K562 (cell line): ENCODE measurements at regions of chr2 and their contacts with region 1.

Region 1: DNA sequence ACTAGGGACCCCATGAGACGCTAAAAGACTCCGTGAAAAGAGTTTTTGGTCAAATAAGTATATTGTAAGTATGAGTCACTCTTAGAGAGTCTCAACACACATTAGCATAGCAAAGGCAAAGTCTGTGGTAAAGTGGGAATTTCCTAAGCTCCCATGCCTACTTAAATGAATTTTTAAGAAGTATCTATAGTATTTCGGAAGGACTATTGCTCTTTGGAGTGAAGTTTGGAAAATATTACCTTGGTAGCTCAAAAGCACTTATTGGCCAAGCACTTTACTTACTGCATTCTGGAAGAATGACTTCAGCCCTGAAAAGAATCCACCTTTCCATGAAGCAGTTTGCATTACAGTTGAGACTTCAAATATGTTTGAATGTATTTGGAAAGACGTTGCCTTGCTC is 57.1 kb downstream of the CAVIN2 start:
- DNase-seq: no peak
- ATAC-seq: no peak
- H3K4me3 ChIP-seq: no peak overlapping the region
- H3K27ac ChIP-seq: no peak overlapping the region
- H3K4me1 ChIP-seq: peaks cover 0 to 7% of the 10 kb centered on the region in 2 experiments; a peak in 1 of 5 replicates
- H3K27me3 ChIP-seq: peaks cover 0 to 2% of the 10 kb centered on the region in 2 experiments; a peak in 2 of 5 replicates
- CTCF ChIP-seq: no peak
- EP300 ChIP-seq: no peak
- POLR2A ChIP-seq: no peak
- RAD21 ChIP-seq: no peak

Region 2: GRCh38 chr2:191544461-191545062 is 245.2 kb before region 1 on chr2:
- CTCF ChIA-PET with region 1: no interaction called
- POLR2A ChIA-PET with region 1: interaction called, 3 read pairs
- in situ Hi-C with region 1: loop called (anchors 10 kb)
- intact Hi-C with region 1: no loop called
- DNase-seq: no peak
- ATAC-seq: no peak
- H3K4me3 ChIP-seq: no peak overlapping the region
- H3K27ac ChIP-seq: no peak overlapping the region
- H3K4me1 ChIP-seq: no peaks in the 10 kb centered on the region; a peak in 1 of 5 replicates
- H3K27me3 ChIP-seq: no peaks in the 10 kb centered on the region; a peak in 1 of 5 replicates
- CTCF ChIP-seq: no peak
- EP300 ChIP-seq: no peak
- POLR2A ChIP-seq: no peak
- RAD21 ChIP-seq: no peak